Naive thymus-derived CD4-positive, alpha-beta T cell (primary cell): ENCODE measurements at regions of chr7 and their contacts with region 1.

Region 1: DNA sequence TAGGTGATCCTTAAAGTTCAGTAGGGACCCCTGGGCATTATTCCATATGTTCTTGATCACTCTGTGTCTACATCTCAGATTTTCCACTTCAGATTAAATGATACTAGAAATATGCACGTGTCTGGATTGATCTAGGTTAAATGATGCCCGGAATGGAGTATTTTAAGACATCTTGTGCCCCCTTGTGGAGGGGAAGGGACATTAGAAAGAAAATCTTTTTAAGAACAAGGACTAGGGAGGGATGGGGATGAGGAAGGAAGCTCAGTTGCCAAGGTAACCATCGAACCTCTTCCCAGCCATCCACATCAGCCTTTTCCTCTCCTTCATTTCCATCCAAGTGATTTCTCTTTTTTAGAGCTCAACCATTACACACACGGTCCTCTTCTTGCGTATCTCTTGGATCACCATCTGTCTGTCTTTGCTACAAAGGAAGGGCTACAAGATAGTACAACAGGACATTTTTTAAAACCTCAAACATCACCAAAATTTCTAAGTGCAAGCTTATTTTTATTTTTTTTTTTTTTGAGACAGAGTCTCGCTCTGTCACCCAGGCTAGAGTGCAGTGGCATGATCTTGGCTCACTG is 40.5 kb downstream of the PRSS2 start:
- DNase-seq: peak in 7 of 9 donors; percentile 73 to 86 (median 79)
- ATAC-seq: peak; percentile 19
- H3K4me3 ChIP-seq: no peak overlapping the region
- H3K4me3 Mint-ChIP-seq: peak overlapping the region; percentile 58 to 100 (median 76)
- H3K27ac ChIP-seq: peak overlapping the region; percentile 98
- H3K27ac Mint-ChIP-seq: peak overlapping the region; percentile 92 to 100 (median 100)
- H3K4me1 ChIP-seq: peaks cover 47 to 89% of the 10 kb centered on the region in 2 donors
- H3K4me1 Mint-ChIP-seq: peaks cover 57 to 100% (median 91%) of the 10 kb centered on the region in 7 donors
- H3K27me3 ChIP-seq: no peaks in the 10 kb centered on the region
- H3K27me3 Mint-ChIP-seq: peaks cover 0 to 6% (median 0%) of the 10 kb centered on the region in 5 donors

Region 2: GRCh38 chr7:142323706-142324105 is 487.5 kb before region 1 on chr7:
- CTCF ChIA-PET with region 1: interaction called, 27 read pairs
- POLR2A ChIA-PET with region 1: interaction called, 67 read pairs
- intact Hi-C with region 1: loop called (anchors 1 kb)
- DNase-seq: peak in 5 of 9 donors; percentile 25 to 44 (median 41)
- ATAC-seq: peak; percentile 40
- H3K4me3 ChIP-seq: no peak overlapping the region
- H3K4me3 Mint-ChIP-seq: peak overlapping the region in 7 of 10 donors; percentile 4 to 65 (median 54)
- H3K27ac ChIP-seq: peak overlapping the region; percentile 34
- H3K27ac Mint-ChIP-seq: peak overlapping the region; percentile 17 to 96 (median 80)
- H3K4me1 ChIP-seq: peaks cover 0 to 24% of the 10 kb centered on the region in 2 donors
- H3K4me1 Mint-ChIP-seq: peaks cover 5 to 51% (median 34%) of the 10 kb centered on the region in 7 donors
- H3K27me3 ChIP-seq: no peaks in the 10 kb centered on the region
- H3K27me3 Mint-ChIP-seq: peaks cover 0 to 23% (median 4%) of the 10 kb centered on the region in 5 donors

Region 3: DNA sequence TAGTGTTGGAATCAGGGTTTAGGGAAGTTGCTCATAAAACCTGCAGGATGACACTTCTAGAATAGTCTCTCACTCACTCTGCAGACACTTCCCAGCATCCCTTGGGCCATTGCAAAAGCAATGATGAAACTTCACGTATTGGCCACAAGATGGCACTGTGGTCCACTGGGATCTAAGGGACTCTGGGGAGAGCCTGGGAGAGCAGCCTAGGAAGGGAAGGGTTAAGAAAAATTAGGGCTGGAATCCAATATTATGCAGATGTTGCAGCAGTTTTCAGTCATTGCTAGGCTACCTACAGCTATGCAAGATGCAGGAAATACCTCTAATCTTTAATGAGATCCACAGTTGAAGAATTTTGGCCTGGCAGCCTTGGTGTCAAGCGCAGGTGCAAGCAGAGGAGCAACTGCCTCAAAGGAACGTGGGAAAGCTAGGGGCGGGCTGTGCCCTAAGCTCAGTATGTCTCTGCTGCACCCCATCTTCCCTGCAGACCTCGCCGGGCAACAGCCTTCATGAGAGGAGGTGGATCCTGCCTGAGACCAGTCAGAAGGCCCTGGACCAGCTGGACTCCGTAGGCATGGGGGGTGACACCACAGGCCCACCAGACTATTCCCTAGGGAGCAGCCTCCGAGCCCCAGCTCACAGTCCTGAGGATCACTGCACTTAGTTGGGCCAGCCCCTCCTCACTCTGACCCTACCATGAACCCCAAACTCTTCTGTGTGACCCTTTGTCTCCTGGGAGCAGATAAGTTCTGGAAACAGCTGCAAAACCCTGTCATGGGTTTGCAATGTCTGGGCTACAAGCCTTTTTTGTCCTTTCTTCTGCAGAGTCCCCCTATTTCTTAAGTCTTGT is 425.5 kb before region 1 on chr7:
- CTCF ChIA-PET with region 1: interaction called, 4 read pairs
- POLR2A ChIA-PET with region 1: interaction called, 13 read pairs
- intact Hi-C with region 1: loop called in 1 of 2 experiments (anchors 2 kb)
- DNase-seq: peak in 5 of 9 donors; percentile 31 to 45 (median 39)
- ATAC-seq: peak; percentile 80
- H3K4me3 ChIP-seq: no peak overlapping the region
- H3K4me3 Mint-ChIP-seq: peak overlapping the region in 8 of 10 donors; percentile 1 to 75 (median 26)
- H3K27ac ChIP-seq: no peak overlapping the region
- H3K27ac Mint-ChIP-seq: peak overlapping the region in 3 of 9 donors; percentile 61 to 67 (median 63)
- H3K4me1 ChIP-seq: peaks cover 0 to 16% of the 10 kb centered on the region in 2 donors
- H3K4me1 Mint-ChIP-seq: peaks cover 22 to 38% (median 29%) of the 10 kb centered on the region in 7 donors
- H3K27me3 ChIP-seq: no peaks in the 10 kb centered on the region
- H3K27me3 Mint-ChIP-seq: no peaks in the 10 kb centered on the region

Region 4: DNA sequence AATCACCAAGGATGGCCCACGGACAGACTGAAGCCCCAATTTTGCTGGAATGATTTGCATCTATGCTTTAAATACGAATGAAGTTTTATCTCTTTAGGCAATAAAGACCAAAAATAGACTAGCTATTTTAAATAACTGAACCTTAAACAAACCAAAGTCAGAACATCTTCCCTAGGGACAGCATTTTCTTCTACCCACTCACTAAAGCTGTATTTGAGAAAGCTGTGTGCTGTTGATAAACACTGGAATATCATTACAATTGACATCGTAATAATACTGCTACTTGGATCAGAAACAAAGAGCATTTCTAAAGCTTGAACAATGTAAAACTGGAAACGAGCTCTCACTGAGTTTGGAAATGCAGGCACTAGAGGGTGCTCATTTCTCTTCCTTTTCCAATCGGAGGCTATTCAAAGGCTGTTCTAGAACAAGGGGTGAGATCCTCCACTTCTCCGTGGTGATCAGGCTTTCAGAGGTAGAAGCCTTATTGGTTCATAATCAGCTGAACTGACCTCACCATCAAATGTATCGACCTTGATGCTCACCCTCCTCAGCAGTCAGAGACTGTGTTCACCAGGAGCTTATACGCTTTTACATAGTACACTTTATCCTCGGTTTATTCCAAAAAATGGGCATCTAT is 287.3 kb before region 1 on chr7:
- CTCF ChIA-PET with region 1: interaction called, 4 read pairs
- POLR2A ChIA-PET with region 1: interaction called, 12 read pairs
- intact Hi-C with region 1: no loop called
- DNase-seq: no peak
- ATAC-seq: no peak
- H3K4me3 ChIP-seq: no peak overlapping the region
- H3K4me3 Mint-ChIP-seq: no peak overlapping the region
- H3K27ac ChIP-seq: no peak overlapping the region
- H3K27ac Mint-ChIP-seq: peak overlapping the region in 1 of 9 donors; percentile 52
- H3K4me1 ChIP-seq: peaks cover 0 to 14% of the 10 kb centered on the region in 2 donors
- H3K4me1 Mint-ChIP-seq: peaks cover 11 to 31% (median 22%) of the 10 kb centered on the region in 7 donors
- H3K27me3 ChIP-seq: no peaks in the 10 kb centered on the region
- H3K27me3 Mint-ChIP-seq: peaks cover 0 to 27% (median 0%) of the 10 kb centered on the region in 5 donors

Region 5: GRCh38 chr7:142618655-142619351 is 192.4 kb before region 1 on chr7:
- CTCF ChIA-PET with region 1: no interaction called
- POLR2A ChIA-PET with region 1: interaction called, 28 read pairs
- intact Hi-C with region 1: no loop called
- DNase-seq: no peak
- ATAC-seq: no peak
- H3K4me3 ChIP-seq: peak overlapping the region; percentile 36
- H3K4me3 Mint-ChIP-seq: peak overlapping the region; percentile 55 to 82 (median 68)
- H3K27ac ChIP-seq: peak overlapping the region; percentile 65
- H3K27ac Mint-ChIP-seq: peak overlapping the region in 8 of 9 donors; percentile 68 to 81 (median 74)
- H3K4me1 ChIP-seq: no peaks in the 10 kb centered on the region
- H3K4me1 Mint-ChIP-seq: peaks cover 0 to 17% (median 7%) of the 10 kb centered on the region in 7 donors
- H3K27me3 ChIP-seq: no peaks in the 10 kb centered on the region
- H3K27me3 Mint-ChIP-seq: peaks cover 0 to 27% (median 4%) of the 10 kb centered on the region in 5 donors

Region 6: GRCh38 chr7:142796608-142797385 is 14.4 kb before region 1 on chr7:
- CTCF ChIA-PET with region 1: interaction called, 314 read pairs
- POLR2A ChIA-PET with region 1: interaction called, 5,102 read pairs
- intact Hi-C with region 1: loop called (anchors 1 kb)
- DNase-seq: peak in 3 of 9 donors; percentile 25 to 45 (median 40)
- ATAC-seq: peak; percentile 2
- H3K4me3 ChIP-seq: peak overlapping the region; percentile 83
- H3K4me3 Mint-ChIP-seq: peak overlapping the region; percentile 95 to 100 (median 99)
- H3K27ac ChIP-seq: peak overlapping the region; percentile 98
- H3K27ac Mint-ChIP-seq: peak overlapping the region; percentile 99 to 100 (median 100)
- H3K4me1 ChIP-seq: peaks cover 43 to 45% of the 10 kb centered on the region in 2 donors
- H3K4me1 Mint-ChIP-seq: peaks cover 29 to 70% (median 67%) of the 10 kb centered on the region in 7 donors
- H3K27me3 ChIP-seq: no peaks in the 10 kb centered on the region
- H3K27me3 Mint-ChIP-seq: peaks cover 0 to 2% (median 0%) of the 10 kb centered on the region in 5 donors

Region 7: DNA sequence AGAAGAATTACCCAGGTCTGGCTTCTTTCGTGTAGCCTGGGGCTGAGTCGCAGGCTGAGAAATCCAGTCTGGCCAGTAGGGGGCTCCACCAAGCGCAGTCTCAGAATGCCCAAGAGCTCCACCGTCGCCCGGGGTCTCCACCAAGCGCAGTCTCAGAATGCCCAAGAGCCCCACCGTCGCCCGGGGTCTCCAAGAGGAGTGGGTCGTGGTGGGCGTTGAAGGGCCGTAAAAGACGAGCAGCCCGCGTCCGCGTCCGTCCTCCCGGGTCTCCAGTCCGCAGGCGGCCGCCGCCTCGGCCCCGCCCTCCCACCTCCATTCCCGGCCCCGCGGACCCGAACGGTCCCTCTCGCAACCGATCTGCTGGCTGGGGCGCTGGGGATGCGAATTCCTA is 569.0 kb after region 1 on chr7:
- CTCF ChIA-PET with region 1: no interaction called
- POLR2A ChIA-PET with region 1: no interaction called
- intact Hi-C with region 1: loop called (anchors 2 to 5 kb)
- DNase-seq: peak; percentile 76 to 90 (median 84)
- ATAC-seq: peak; percentile 73
- H3K4me3 ChIP-seq: peak overlapping the region; percentile 92
- H3K4me3 Mint-ChIP-seq: peak overlapping the region in 9 of 10 donors; percentile 84 to 96 (median 91)
- H3K27ac ChIP-seq: peak overlapping the region; percentile 91
- H3K27ac Mint-ChIP-seq: peak overlapping the region; percentile 90 to 96 (median 93)
- H3K4me1 ChIP-seq: peaks cover 58 to 70% of the 10 kb centered on the region in 2 donors
- H3K4me1 Mint-ChIP-seq: peaks cover 35 to 46% (median 42%) of the 10 kb centered on the region in 7 donors
- H3K27me3 ChIP-seq: no peaks in the 10 kb centered on the region
- H3K27me3 Mint-ChIP-seq: no peaks in the 10 kb centered on the region

Region 8: DNA sequence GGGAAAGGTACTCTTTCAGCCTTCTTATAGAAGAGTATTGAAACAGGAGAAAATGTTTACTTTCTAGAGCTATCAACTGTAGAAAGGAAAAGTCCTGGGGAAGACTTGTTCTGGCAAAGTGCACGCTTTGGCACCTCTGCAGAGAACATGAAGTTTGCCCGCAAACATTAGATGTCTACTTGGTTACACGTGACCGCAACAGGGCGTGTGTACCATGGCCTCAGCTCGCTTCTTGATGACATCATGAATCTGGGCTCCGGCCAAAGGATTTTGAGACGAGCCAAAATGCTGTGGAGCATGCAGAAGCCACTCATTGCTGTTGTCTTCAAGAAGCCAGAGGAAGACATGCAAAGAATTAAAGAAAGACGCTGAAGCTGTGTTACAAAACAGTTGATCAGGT is 623.4 kb after region 1 on chr7:
- CTCF ChIA-PET with region 1: no interaction called
- POLR2A ChIA-PET with region 1: no interaction called
- intact Hi-C with region 1: no loop called
- DNase-seq: no peak
- ATAC-seq: no peak
- H3K4me3 ChIP-seq: no peak overlapping the region
- H3K4me3 Mint-ChIP-seq: no peak overlapping the region
- H3K27ac ChIP-seq: no peak overlapping the region
- H3K27ac Mint-ChIP-seq: no peak overlapping the region
- H3K4me1 ChIP-seq: peaks cover 0 to 5% of the 10 kb centered on the region in 2 donors
- H3K4me1 Mint-ChIP-seq: peaks cover 13 to 57% (median 48%) of the 10 kb centered on the region in 7 donors
- H3K27me3 ChIP-seq: no peaks in the 10 kb centered on the region
- H3K27me3 Mint-ChIP-seq: peaks cover 0 to 14% (median 0%) of the 10 kb centered on the region in 5 donors

Region 9: GRCh38 chr7:143490717-143491306 is 679.6 kb after region 1 on chr7:
- CTCF ChIA-PET with region 1: no interaction called
- POLR2A ChIA-PET with region 1: no interaction called
- intact Hi-C with region 1: no loop called
- DNase-seq: no peak
- ATAC-seq: no peak
- H3K4me3 ChIP-seq: no peak overlapping the region
- H3K4me3 Mint-ChIP-seq: no peak overlapping the region
- H3K27ac ChIP-seq: no peak overlapping the region
- H3K27ac Mint-ChIP-seq: peak overlapping the region in 1 of 9 donors; percentile 6
- H3K4me1 ChIP-seq: no peaks in the 10 kb centered on the region
- H3K4me1 Mint-ChIP-seq: peaks cover 8 to 31% (median 21%) of the 10 kb centered on the region in 7 donors
- H3K27me3 ChIP-seq: no peaks in the 10 kb centered on the region
- H3K27me3 Mint-ChIP-seq: peaks cover 0 to 2% (median 0%) of the 10 kb centered on the region in 5 donors